Posterior vena cava (tissue), 2 donors: ENCODE measurements at regions of chr7 and their contacts with region 1.

Region 1: DNA sequence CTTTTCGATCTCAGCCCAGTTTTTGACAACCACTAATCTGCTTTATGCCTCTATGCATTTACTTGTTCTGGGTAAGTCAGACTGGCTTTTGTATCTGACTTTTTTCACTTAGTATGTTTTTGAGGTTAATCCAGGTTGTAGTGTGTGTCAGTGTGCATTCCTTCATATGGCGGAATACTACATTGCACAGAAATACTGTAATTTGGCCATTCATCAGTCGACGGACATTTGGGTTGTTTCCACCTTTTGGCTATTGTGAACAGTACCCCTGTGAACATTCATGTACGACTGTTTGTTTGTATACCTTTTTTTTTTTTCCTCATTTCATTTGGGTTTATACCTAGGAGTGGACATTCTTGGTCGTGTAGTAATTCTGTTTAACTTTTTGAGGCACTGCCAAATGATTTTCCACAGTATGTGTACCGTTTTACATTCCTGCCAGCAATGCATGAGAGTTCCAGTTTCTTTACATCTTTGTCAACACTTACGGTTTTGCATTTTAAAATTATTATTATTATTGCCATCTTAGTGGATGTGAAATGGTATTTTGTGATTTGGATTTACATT is 57.4 kb downstream of the MKLN1 start:
- DNase-seq: no peak

Region 2: GRCh38 chr7:131355921-131356777 is 29.0 kb before region 1 on chr7:
- intact Hi-C with region 1: loop called in 1 of 2 experiments (anchors 1 kb)
- DNase-seq: no peak